Tibial artery (tissue), 4 donors: ENCODE measurements at regions of chr6 and their contacts with region 1.

Region 1: GRCh38 chr6:143986463-143987065 is 21.5 kb downstream of the PLAGL1 start:
- DNase-seq: no peak
- H3K4me3 ChIP-seq: no peak overlapping the region
- H3K27ac ChIP-seq: no peak overlapping the region
- H3K4me1 ChIP-seq: peaks cover 0 to 7% (median 0%) of the 10 kb centered on the region in 4 donors
- H3K27me3 ChIP-seq: no peaks in the 10 kb centered on the region
- CTCF ChIP-seq: no peak

Region 2: GRCh38 chr6:142485256-142485655 is 1501.3 kb before region 1 on chr6:
- intact Hi-C with region 1: loop called (anchors 5 kb)
- DNase-seq: no peak
- H3K4me3 ChIP-seq: no peak overlapping the region
- H3K27ac ChIP-seq: no peak overlapping the region
- H3K4me1 ChIP-seq: no peaks in the 10 kb centered on the region
- H3K27me3 ChIP-seq: no peaks in the 10 kb centered on the region
- CTCF ChIP-seq: no peak

Region 3: GRCh38 chr6:143656026-143656425 is 330.5 kb before region 1 on chr6:
- intact Hi-C with region 1: no loop called
- DNase-seq: no peak
- H3K4me3 ChIP-seq: no peak overlapping the region
- H3K27ac ChIP-seq: no peak overlapping the region
- H3K4me1 ChIP-seq: peaks cover 0 to 9% (median 0%) of the 10 kb centered on the region in 4 donors
- H3K27me3 ChIP-seq: no peaks in the 10 kb centered on the region
- CTCF ChIP-seq: no peak

Region 4: DNA sequence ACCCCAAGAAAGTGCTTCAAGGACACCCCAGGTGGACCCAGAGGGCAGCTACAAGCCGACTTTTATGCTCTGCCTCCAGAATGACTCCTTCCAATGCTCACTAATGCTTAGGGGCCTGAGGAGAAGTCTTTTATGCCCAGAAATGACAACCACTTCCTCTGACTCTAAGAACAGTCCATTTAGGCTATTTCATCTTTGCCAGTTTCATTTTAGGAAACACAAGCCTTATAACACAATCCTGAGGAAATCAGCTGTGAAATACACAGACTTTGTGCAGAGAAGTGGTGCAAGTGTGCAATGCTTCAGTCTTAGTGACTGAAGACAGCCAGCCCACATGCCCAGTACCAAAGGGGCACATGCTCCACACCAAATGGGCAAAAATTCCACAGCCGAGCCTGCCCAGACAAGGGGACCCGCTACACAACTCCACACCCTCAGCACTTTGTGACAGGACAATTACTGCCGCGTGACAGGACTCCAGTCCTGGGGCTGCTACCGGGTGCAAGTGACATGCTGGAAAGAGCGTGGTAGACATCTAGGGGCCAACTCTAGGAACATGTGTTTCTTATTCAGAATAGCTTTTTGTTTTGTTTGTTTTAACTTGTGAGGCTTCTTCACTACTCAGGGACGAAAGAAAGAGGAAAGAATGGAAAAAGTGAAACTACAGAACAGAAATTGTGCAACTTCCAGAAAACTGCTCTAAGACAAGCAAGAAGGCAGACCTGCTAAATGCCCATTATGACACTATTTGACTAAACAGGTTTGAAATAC is 49.7 kb after region 1 on chr6:
- intact Hi-C with region 1: no loop called
- DNase-seq: peak in 1 of 2 donors; percentile 39
- H3K4me3 ChIP-seq: peak overlapping the region; percentile 34 to 36
- H3K27ac ChIP-seq: peak overlapping the region in 1 of 2 donors; percentile 42
- H3K4me1 ChIP-seq: peaks cover 0 to 8% (median 4%) of the 10 kb centered on the region in 4 donors
- H3K27me3 ChIP-seq: no peaks in the 10 kb centered on the region
- CTCF ChIP-seq: no peak